Pancreas (tissue), 10 donors: ENCODE measurements at regions of chr2 and their contacts with region 1.

Region 1: GRCh38 chr2:207746131-207746530 is 23.6 kb downstream of the FZD5 start:
- DNase-seq: peak in 4 of 6 donors; percentile 45 to 71 (median 48)
- ATAC-seq: peak; percentile 73 to 86 (median 85)
- H3K4me3 ChIP-seq: no peak overlapping the region
- H3K27ac ChIP-seq: no peak overlapping the region
- H3K4me1 ChIP-seq: peaks cover 20 to 32% (median 24%) of the 10 kb centered on the region in 3 donors
- H3K27me3 ChIP-seq: no peaks in the 10 kb centered on the region
- CTCF ChIP-seq: peak; percentile 58 to 85 (median 68)

Region 2: DNA sequence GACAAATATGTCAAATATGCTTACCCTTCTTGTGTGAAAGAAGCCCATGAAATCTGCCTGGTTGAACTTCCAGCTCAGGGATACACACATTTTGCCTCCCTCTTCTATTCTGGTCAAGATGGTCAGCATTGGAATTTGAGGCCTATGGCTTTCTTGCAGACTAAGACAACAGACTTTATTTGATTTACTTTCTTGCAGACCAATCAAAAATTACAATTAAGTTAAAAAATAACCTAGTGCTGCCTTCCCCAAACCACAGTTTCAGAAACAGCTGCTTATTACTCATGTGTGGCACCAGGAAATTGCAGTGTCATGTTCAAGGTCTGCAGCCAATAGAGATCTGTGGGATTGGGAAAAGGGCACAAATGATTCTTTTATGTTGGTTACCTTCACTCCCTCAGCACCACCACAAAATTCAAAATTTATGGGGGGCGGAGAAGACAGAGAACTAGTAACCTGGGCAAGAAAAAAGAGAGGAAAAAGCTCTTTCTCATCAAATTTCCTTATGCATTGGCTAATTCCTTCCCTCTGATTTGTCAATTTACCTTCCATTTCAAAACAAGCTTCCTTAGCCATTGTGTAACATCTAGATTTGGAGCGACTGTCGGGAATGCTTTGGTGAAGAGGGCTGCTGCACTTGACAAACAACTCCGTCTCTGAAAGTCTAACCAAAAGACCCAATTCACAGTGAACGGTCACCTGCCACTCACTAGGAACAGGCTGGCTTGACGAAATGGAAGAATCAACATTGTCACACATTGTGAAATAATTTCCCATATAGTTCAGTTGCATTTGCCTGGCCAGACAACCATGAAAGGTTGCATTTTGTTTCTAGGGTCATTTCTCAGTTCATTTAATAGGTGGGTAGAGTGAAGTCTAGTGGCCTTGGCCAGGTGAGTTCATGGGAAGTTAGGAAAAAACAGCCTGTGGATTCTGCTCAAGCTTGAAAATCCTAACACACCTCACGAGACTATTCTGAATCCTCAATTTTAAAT is 124.0 kb after region 1 on chr2:
- intact Hi-C with region 1: no loop called
- DNase-seq: peak in 3 of 6 donors; percentile 22 to 29 (median 28)
- ATAC-seq: peak; percentile 91 to 95 (median 94)
- H3K4me3 ChIP-seq: no peak overlapping the region
- H3K27ac ChIP-seq: peak overlapping the region in 2 of 4 donors; percentile 27 to 67
- H3K4me1 ChIP-seq: peaks cover 0 to 19% (median 17%) of the 10 kb centered on the region in 3 donors
- H3K27me3 ChIP-seq: no peaks in the 10 kb centered on the region
- CTCF ChIP-seq: no peak

Region 3: GRCh38 chr2:207974216-207974605 is 228.1 kb after region 1 on chr2:
- intact Hi-C with region 1: loop called in 2 of 3 experiments (anchors 10 kb)
- DNase-seq: no peak
- ATAC-seq: peak in 1 of 4 donors; percentile 37
- H3K4me3 ChIP-seq: no peak overlapping the region
- H3K27ac ChIP-seq: no peak overlapping the region
- H3K4me1 ChIP-seq: peaks cover 0 to 9% (median 7%) of the 10 kb centered on the region in 3 donors
- H3K27me3 ChIP-seq: no peaks in the 10 kb centered on the region
- CTCF ChIP-seq: no peak

Region 4: GRCh38 chr2:208006833-208007232 is 260.7 kb after region 1 on chr2:
- intact Hi-C with region 1: no loop called
- DNase-seq: no peak
- ATAC-seq: no peak
- H3K4me3 ChIP-seq: no peak overlapping the region
- H3K27ac ChIP-seq: no peak overlapping the region
- H3K4me1 ChIP-seq: no peaks in the 10 kb centered on the region
- H3K27me3 ChIP-seq: no peaks in the 10 kb centered on the region
- CTCF ChIP-seq: no peak

Region 5: DNA sequence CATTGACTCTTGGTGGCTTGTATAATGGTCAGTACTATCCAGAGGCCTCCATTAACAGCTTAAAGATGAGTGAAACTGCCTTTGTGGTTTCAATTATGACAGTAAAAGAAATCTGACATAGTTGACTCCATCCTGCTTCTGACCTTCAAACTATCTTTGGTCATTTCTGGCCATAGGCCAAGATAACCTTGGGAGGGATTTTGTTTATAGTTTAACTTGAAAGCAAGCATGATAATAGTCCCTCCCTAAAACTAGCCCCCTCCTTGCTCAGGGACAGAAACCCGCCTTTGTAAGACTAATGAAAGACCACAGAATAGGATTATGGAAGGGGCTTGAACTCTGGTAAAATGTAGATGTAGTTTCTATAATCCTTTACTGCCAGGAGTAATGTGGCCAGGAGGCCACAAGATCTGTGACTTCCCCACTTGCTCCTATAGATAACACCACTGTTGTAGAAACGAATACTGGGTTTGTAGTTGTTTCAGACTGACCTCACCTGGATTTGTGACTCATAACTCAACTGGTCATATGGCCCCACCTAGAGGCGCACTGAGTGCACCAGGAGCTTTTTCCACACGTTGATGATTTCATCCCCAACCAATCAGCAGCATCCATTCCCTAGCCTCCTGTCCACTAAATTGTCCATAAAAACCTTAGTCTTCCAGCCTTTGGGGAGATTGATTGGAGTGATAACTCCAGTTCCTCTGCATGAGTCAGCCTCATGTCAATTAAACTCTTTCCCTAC is 287.8 kb after region 1 on chr2:
- intact Hi-C with region 1: loop called in 1 of 3 experiments (anchors 10 kb)
- DNase-seq: peak in 2 of 6 donors; percentile 25 to 42
- ATAC-seq: peak; percentile 82 to 95 (median 84)
- H3K4me3 ChIP-seq: no peak overlapping the region
- H3K27ac ChIP-seq: no peak overlapping the region
- H3K4me1 ChIP-seq: no peaks in the 10 kb centered on the region
- H3K27me3 ChIP-seq: no peaks in the 10 kb centered on the region
- CTCF ChIP-seq: no peak

Region 6: GRCh38 chr2:208040199-208041171 is 294.4 kb after region 1 on chr2:
- intact Hi-C with region 1: loop called in 2 of 3 experiments (anchors 10 kb)
- DNase-seq: peak; percentile 47 to 79 (median 60)
- ATAC-seq: peak; percentile 80 to 92 (median 87)
- H3K4me3 ChIP-seq: no peak overlapping the region
- H3K27ac ChIP-seq: no peak overlapping the region
- H3K4me1 ChIP-seq: no peaks in the 10 kb centered on the region
- H3K27me3 ChIP-seq: no peaks in the 10 kb centered on the region
- CTCF ChIP-seq: peak; percentile 42 to 68 (median 54)

Region 7: GRCh38 chr2:208142240-208142924 is 396.3 kb after region 1 on chr2:
- intact Hi-C with region 1: no loop called
- DNase-seq: no peak
- ATAC-seq: no peak
- H3K4me3 ChIP-seq: no peak overlapping the region
- H3K27ac ChIP-seq: no peak overlapping the region
- H3K4me1 ChIP-seq: no peaks in the 10 kb centered on the region
- H3K27me3 ChIP-seq: no peaks in the 10 kb centered on the region
- CTCF ChIP-seq: no peak